CD8-positive, alpha-beta memory T cell (primary cell): ENCODE measurements at regions of chr19 and their contacts with region 1.

Region 1: DNA sequence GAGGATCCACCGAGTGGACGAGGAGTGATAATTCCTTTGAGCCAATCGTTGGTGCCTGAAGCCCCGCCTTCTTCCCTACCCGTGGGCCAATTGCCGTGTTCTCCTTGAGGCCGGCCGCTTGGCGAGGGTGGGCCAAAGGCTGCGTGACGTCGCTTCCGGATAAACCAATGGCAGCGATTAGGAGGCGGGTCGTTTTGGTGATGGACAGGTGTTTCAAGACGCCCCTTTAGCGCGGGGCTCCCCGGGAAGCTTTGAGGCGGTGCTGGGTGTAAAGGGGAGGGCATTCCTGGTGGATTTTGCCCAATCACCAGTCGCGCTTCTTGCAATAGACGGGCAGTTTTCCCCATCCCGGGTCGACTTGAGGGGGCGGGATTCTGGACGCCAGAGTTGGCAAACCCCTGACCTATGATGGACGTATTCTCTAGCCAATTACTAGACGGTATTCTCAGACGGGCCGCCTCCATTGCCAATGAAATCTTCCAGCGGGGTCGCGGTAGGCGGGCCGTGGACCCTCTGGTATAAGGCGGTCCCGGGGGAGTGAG is 310 bp upstream of the PRMT1 start:
- DNase-seq: peak; percentile 97 to 99 (median 98)
- H3K4me3 ChIP-seq: peak overlapping the region; percentile 88
- H3K4me3 Mint-ChIP-seq: peak overlapping the region; percentile 90 to 100 (median 99)
- H3K27ac ChIP-seq: peak overlapping the region; percentile 95
- H3K27ac Mint-ChIP-seq: peak overlapping the region; percentile 92 to 100 (median 99)
- H3K4me1 ChIP-seq: peaks cover 37% of the 10 kb centered on the region
- H3K4me1 Mint-ChIP-seq: peaks cover 34 to 56% (median 38%) of the 10 kb centered on the region in 3 donors
- H3K27me3 ChIP-seq: no peaks in the 10 kb centered on the region
- H3K27me3 Mint-ChIP-seq: peaks cover 0 to 2% of the 10 kb centered on the region in 2 donors

Region 2: GRCh38 chr19:49442793-49443365 is 233.9 kb before region 1 on chr19:
- CTCF ChIA-PET with region 1: no interaction called
- POLR2A ChIA-PET with region 1: no interaction called
- DNase-seq: peak in 3 of 5 donors; percentile 33 to 67 (median 51)
- H3K4me3 ChIP-seq: peak overlapping the region; percentile 69
- H3K4me3 Mint-ChIP-seq: peak overlapping the region; percentile 77 to 92 (median 84)
- H3K27ac ChIP-seq: peak overlapping the region; percentile 51
- H3K27ac Mint-ChIP-seq: peak overlapping the region in 5 of 8 donors; percentile 67 to 88 (median 84)
- H3K4me1 ChIP-seq: peaks cover 20% of the 10 kb centered on the region
- H3K4me1 Mint-ChIP-seq: peaks cover 29 to 45% (median 35%) of the 10 kb centered on the region in 3 donors
- H3K27me3 ChIP-seq: peaks cover 41% of the 10 kb centered on the region
- H3K27me3 Mint-ChIP-seq: peaks cover 44 to 45% of the 10 kb centered on the region in 2 donors

Region 3: GRCh38 chr19:49497047-49497788 is 179.5 kb before region 1 on chr19:
- CTCF ChIA-PET with region 1: interaction called, 7 read pairs
- POLR2A ChIA-PET with region 1: interaction called, 14 read pairs
- DNase-seq: peak; percentile 66 to 83 (median 74)
- H3K4me3 ChIP-seq: peak overlapping the region; percentile 95
- H3K4me3 Mint-ChIP-seq: peak overlapping the region; percentile 95 to 100 (median 100)
- H3K27ac ChIP-seq: peak overlapping the region; percentile 94
- H3K27ac Mint-ChIP-seq: peak overlapping the region; percentile 88 to 99 (median 98)
- H3K4me1 ChIP-seq: peaks cover 49% of the 10 kb centered on the region
- H3K4me1 Mint-ChIP-seq: peaks cover 58 to 70% (median 67%) of the 10 kb centered on the region in 3 donors
- H3K27me3 ChIP-seq: no peaks in the 10 kb centered on the region
- H3K27me3 Mint-ChIP-seq: peaks cover 0 to 19% of the 10 kb centered on the region in 2 donors

Region 4: GRCh38 chr19:49502866-49503581 is 173.7 kb before region 1 on chr19:
- CTCF ChIA-PET with region 1: interaction called, 10 read pairs
- POLR2A ChIA-PET with region 1: interaction called, 14 read pairs
- DNase-seq: peak in 3 of 5 donors; percentile 21 to 59 (median 59)
- H3K4me3 ChIP-seq: no peak overlapping the region
- H3K4me3 Mint-ChIP-seq: peak overlapping the region in 6 of 7 donors; percentile 5 to 45 (median 24)
- H3K27ac ChIP-seq: no peak overlapping the region
- H3K27ac Mint-ChIP-seq: peak overlapping the region; percentile 88 to 99 (median 96)
- H3K4me1 ChIP-seq: peaks cover 44% of the 10 kb centered on the region
- H3K4me1 Mint-ChIP-seq: peaks cover 38 to 48% (median 44%) of the 10 kb centered on the region in 3 donors
- H3K27me3 ChIP-seq: no peaks in the 10 kb centered on the region
- H3K27me3 Mint-ChIP-seq: peaks cover 0 to 10% of the 10 kb centered on the region in 2 donors

Region 5: DNA sequence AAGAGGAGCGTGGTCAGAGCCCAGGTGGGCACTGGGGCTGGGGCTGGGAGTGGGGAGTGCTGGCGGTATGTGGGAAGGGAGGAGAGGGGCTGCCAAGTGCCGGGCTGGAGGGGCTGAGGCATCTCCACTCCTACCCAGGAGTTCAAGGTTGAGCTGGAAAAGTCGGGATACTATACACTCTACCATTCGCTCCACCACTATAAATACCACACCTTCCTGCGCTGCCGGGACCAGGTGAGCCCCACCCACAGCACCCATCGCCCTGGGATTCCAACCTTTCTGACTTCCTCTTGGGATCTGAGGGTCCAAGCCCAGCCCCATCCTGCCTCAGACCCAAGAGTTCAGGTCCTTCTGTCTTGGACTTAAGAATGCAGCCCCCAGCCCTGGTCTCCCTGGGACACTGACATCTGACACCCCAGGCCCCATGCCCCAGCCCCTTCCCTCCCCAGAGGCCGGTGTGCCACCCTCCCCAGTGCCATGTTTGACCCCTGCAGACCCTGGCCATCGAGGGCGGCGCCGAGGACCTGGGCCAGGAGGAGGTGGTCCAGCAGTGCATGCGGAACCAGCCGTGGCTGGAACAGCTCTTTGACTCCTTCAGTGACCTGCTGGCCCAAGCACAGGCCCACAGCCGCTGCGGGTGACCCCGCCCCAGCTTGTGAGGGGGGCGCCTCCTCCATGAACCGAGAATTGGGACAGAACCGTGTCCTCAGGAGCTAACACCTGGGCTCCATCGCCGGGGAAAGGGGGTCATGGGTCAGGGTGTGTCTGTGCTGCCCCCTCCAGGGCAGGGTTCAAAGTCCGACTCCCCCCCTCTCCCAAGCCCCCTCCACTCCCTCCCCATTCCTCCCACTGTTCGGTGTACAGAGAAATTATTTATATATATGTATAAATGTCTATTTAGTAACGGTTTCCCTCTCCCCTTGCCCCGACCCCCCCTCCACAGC is 51.5 kb before region 1 on chr19:
- CTCF ChIA-PET with region 1: no interaction called
- POLR2A ChIA-PET with region 1: no interaction called
- DNase-seq: no peak
- H3K4me3 ChIP-seq: no peak overlapping the region
- H3K4me3 Mint-ChIP-seq: no peak overlapping the region
- H3K27ac ChIP-seq: no peak overlapping the region
- H3K27ac Mint-ChIP-seq: peak overlapping the region in 2 of 8 donors; percentile 26 to 68
- H3K4me1 ChIP-seq: no peaks in the 10 kb centered on the region
- H3K4me1 Mint-ChIP-seq: no peaks in the 10 kb centered on the region
- H3K27me3 ChIP-seq: no peaks in the 10 kb centered on the region
- H3K27me3 Mint-ChIP-seq: no peaks in the 10 kb centered on the region

Region 6: DNA sequence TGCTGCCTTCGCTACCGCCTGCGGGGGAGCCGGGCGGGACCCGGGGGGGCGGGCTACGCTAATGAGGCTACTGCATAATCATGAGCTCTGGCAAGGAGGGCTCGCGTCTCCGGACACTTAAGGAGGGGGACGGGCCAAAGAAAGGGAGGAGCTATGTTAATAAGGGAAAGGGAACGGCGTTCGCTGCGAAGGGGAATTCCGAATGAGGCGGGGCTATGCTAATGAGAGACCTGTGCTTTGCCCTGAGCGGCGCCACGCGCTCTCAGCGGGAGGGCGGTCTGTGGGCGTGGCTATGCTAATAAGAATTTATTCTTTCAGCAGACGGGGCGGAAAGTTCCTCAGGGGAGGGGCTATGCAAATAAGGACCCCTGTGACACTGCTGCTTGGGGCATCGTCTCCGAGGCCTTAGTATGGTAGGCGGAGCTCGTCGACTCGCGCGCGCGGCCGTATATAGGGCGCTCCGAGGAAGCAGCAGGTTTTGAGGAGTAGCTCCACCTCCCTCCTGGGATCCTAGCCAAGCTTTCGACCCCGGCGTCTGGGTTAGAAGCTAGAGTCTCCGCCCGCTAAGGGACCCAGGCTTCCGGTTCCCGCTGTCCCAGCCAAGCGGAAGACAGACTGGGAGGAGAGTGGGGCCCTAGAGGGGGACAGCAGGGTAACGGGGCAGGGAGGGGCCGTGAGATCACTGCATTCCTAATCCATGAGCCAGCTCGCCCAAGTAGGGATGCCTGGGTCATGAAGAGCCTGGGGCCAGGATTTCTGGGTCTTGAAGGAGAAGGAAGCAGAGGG is 36.5 kb before region 1 on chr19 and contains the start of gene RRAS:
- CTCF ChIA-PET with region 1: interaction called, 18 read pairs
- POLR2A ChIA-PET with region 1: interaction called, 14 read pairs
- DNase-seq: peak; percentile 99 to 100 (median 99)
- H3K4me3 ChIP-seq: peak within 1 kb of the TSS; percentile 87
- H3K4me3 Mint-ChIP-seq: peak within 1 kb of the TSS; percentile 85 to 97 (median 95)
- H3K27ac ChIP-seq: peak within 1 kb of the TSS; percentile 94
- H3K27ac Mint-ChIP-seq: peak within 1 kb of the TSS; percentile 94 to 99 (median 98)
- H3K4me1 ChIP-seq: peaks cover 37% of the 10 kb centered on the region
- H3K4me1 Mint-ChIP-seq: peaks cover 52 to 67% (median 61%) of the 10 kb centered on the region in 3 donors
- H3K27me3 ChIP-seq: no peaks in the 10 kb centered on the region
- H3K27me3 Mint-ChIP-seq: peaks cover 0 to 3% of the 10 kb centered on the region in 2 donors
- total RNA-seq, gene RRAS: 5.3 to 5.8 TPM

Region 7: DNA sequence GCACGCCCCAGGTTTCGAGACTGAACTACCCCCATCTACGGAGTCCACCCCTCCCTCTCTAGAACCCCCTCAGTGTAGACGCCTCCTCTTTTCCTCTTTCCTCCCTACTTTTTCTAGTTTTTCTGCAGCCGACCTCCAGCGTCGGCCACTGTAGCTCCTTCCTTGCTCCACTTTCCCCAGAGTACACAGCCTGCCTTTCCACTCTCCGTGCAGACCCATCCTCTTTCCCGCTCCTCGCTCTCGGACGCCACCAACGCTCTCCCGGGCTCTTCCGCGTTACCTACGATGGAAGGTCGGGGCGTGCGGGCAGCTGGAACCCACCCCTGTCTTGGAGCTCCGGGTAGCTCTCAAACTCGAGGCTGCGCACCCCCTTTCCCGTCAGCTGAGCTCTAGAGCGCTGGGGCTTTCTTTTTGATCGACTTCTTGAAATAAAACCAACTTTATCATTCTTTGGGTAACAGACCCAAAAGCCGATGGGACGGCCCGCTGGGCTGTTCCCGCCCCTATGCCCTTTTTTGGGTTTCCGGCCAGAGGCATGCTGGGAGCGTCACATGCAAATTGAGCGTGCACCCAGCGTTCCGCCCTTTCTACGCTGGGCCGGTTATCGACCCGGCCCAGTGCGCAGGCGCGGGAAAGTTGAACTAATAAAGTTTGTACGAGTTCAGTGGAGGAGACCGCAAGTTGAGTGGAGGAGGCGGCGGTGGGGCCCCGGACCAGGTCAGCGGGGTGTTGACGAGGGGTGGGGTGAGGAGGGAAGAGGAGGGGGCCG is 11.2 kb before region 1 on chr19 and contains the starts of genes BCL2L12 and IRF3:
- CTCF ChIA-PET with region 1: interaction called, 26 read pairs
- POLR2A ChIA-PET with region 1: interaction called, 32 read pairs
- DNase-seq: peak; percentile 98 to 100 (median 100)
- H3K4me3 ChIP-seq: peak within 1 kb of the TSS; percentile 99
- H3K4me3 Mint-ChIP-seq: peak within 1 kb of the TSS; percentile 95 to 99 (median 97)
- H3K27ac ChIP-seq: peak within 1 kb of the TSS; percentile 77
- H3K27ac Mint-ChIP-seq: peak within 1 kb of the TSS; percentile 74 to 100 (median 98)
- H3K4me1 ChIP-seq: peaks cover 29% of the 10 kb centered on the region
- H3K4me1 Mint-ChIP-seq: peaks cover 28 to 44% (median 40%) of the 10 kb centered on the region in 3 donors
- H3K27me3 ChIP-seq: no peaks in the 10 kb centered on the region
- H3K27me3 Mint-ChIP-seq: no peaks in the 10 kb centered on the region
- total RNA-seq, gene BCL2L12: 68.2 to 70.9 TPM
- total RNA-seq, gene IRF3: 118 to 127 TPM

Region 8: DNA sequence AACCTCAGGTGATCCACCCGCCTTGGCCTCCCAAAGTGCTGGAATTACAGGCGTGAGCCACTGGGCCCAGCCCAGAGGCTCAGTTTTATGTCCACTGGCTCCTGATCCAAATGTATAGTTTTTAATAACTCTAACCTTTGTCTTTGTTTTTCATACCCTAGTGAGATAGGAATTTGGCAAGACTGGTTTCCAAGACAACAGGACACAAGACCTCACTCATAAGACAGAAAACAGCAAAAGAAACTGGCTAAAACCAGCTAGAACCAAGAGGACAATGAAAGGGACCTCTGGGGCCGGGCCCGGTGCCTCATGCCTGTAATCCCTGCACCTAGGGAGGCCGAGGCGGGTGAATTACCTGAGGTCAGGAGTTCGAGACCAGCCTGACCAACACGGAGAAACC is 41.8 kb after region 1 on chr19:
- CTCF ChIA-PET with region 1: interaction called, 10 read pairs
- POLR2A ChIA-PET with region 1: no interaction called
- DNase-seq: no peak
- H3K4me3 ChIP-seq: no peak overlapping the region
- H3K4me3 Mint-ChIP-seq: peak overlapping the region in 6 of 7 donors; percentile 27 to 69 (median 53)
- H3K27ac ChIP-seq: no peak overlapping the region
- H3K27ac Mint-ChIP-seq: peak overlapping the region in 4 of 8 donors; percentile 38 to 77 (median 56)
- H3K4me1 ChIP-seq: peaks cover 9% of the 10 kb centered on the region
- H3K4me1 Mint-ChIP-seq: peaks cover 7 to 16% (median 8%) of the 10 kb centered on the region in 3 donors
- H3K27me3 ChIP-seq: no peaks in the 10 kb centered on the region
- H3K27me3 Mint-ChIP-seq: no peaks in the 10 kb centered on the region